HCT116 (cell line): ENCODE measurements at regions of chr11 and their contacts with region 1.

Region 1: GRCh38 chr11:117817368-117818040 is 7.0 kb downstream of the FXYD2 start:
- DNase-seq: peak; percentile 63
- ATAC-seq: peak; percentile 72
- H3K4me3 ChIP-seq: no peak overlapping the region
- H3K27ac ChIP-seq: no peak overlapping the region; the same call in 1 of the 2 replicates
- H3K4me1 ChIP-seq: peaks cover 15 to 63% of the 10 kb centered on the region in 2 experiments
- H3K27me3 ChIP-seq: no peaks in the 10 kb centered on the region
- CTCF ChIP-seq: peak in 2 of 3 experiments; percentile 99; a peak in 4 of 6 replicates
- POLR2A ChIP-seq: no peak
- RAD21 ChIP-seq: no peak

Region 2: DNA sequence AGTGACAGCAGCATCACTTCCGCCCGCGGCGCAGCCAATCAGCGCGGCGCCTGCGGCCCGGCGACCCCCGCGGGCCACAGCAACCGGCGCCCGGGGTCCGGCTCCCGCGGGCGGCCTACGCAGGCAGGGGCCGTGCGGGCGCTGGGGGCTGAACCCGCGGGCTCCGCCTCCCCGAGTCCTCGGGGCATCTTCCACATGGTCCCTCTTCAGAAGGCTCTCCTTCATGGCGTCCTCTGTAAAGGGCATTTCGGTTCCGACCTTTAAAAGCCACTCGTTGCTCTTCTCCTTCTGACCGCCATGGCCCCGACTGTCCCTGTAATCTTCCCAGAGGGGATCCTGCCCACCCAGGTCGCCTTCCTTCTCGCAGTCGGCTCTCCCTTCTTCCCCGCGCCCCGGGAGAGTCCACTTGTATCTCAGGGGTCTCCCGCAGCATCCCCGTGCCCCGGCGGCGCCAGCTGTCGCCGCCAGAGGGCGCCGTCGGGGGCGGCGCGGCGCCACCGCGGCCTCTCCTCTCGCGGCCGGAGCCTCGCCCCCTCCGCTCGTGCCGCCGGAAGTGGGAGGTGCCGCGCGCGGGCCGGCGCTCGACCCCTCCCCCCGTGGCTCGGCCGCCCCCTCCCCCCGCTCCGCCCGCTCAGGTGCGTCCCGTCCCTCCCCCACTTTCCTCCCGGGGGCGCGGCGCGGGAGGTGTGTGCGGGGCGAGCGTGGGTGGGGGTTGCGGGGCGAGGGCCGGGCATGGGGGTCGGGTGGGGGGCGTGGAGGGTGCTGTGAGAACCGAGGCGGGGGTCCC is 585.2 kb before region 1 on chr11 and contains the start of gene RNF214:
- CTCF ChIA-PET with region 1: no interaction called
- POLR2A ChIA-PET with region 1: no interaction called
- RAD21 ChIA-PET with region 1: no interaction called
- intact Hi-C with region 1: loop called (anchors 2 kb)
- DNase-seq: no peak
- ATAC-seq: peak; percentile 89
- H3K4me3 ChIP-seq: peak within 1 kb of the TSS; percentile 69 to 80
- H3K27ac ChIP-seq: peak within 1 kb of the TSS; percentile 71
- H3K4me1 ChIP-seq: peaks cover 14 to 20% of the 10 kb centered on the region in 2 experiments; a peak in 3 of 4 replicates
- H3K27me3 ChIP-seq: no peaks in the 10 kb centered on the region
- CTCF ChIP-seq: peak; percentile 37 to 83 (median 72); a peak in 4 of 6 replicates
- POLR2A ChIP-seq: peak; percentile 46
- RAD21 ChIP-seq: no peak
- total RNA-seq, gene RNF214: 29.3 TPM

Region 3: GRCh38 chr11:117426269-117426685 is 391.2 kb before region 1 on chr11:
- CTCF ChIA-PET with region 1: interaction called, 87 read pairs
- POLR2A ChIA-PET with region 1: interaction called, 3 read pairs
- RAD21 ChIA-PET with region 1: interaction called, 3 to 6 read pairs
- intact Hi-C with region 1: loop called (anchors 1 kb)
- DNase-seq: peak; percentile 21
- ATAC-seq: peak; percentile 92
- H3K4me3 ChIP-seq: no peak overlapping the region
- H3K27ac ChIP-seq: no peak overlapping the region
- H3K4me1 ChIP-seq: no peaks in the 10 kb centered on the region
- H3K27me3 ChIP-seq: no peaks in the 10 kb centered on the region
- CTCF ChIP-seq: peak; percentile 79 to 98 (median 98)
- POLR2A ChIP-seq: no peak
- RAD21 ChIP-seq: peak; percentile 87

Region 4: DNA sequence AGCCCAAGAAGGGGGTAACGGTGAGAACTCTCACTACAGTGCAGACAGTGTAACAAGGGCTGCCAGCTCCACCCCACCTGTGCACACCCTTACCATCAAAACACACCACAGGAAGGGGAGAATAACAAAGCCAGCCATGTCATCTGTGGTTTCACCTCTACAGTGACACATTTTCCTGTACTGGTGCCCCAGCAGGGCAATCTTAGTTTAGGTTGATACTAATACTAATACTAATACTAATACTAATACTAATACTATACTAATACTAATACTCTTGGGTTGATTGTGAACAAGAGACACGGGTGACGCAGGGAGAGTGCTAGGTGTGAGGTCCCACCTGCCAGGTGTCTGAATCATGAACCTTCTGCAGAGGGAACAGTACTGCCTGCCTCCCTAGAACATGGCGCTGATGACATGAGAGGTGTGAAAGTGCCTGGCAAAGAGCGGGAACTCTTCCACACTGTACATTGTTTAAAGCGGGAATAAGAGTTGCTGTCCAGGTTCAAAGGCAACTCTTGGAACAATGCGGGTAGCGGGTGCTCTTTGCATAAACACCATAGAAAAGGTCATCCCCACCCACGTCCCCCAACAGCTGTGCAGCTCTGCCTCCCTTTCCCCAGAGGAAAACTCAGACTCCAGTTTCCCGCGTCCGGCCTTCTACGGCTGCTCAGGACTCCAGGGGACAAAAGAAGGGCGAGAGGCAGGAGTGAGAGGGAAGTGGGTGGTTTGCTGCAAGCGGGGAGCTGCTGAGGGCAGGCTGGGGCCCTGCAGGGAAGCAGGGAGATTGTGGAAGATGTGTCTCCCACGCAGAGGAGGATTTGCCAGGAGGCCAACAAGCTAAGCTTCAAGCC is 234.3 kb after region 1 on chr11:
- CTCF ChIA-PET with region 1: interaction called, 61 read pairs
- POLR2A ChIA-PET with region 1: interaction called, 3 read pairs
- RAD21 ChIA-PET with region 1: interaction called, 4 to 13 read pairs
- intact Hi-C with region 1: loop called (anchors 1 kb)
- DNase-seq: no peak
- ATAC-seq: no peak
- H3K4me3 ChIP-seq: no peak overlapping the region
- H3K27ac ChIP-seq: no peak overlapping the region
- H3K4me1 ChIP-seq: peaks cover 0 to 6% of the 10 kb centered on the region in 2 experiments; a peak in 2 of 4 replicates
- H3K27me3 ChIP-seq: no peaks in the 10 kb centered on the region; the same call in 1 of the 2 replicates
- CTCF ChIP-seq: no peak
- POLR2A ChIP-seq: no peak
- RAD21 ChIP-seq: no peak